Activated naive CD4-positive, alpha-beta T cell treated with anti-CD3 and anti-CD28 coated beads for 36 hours (primary cell): ENCODE measurements at regions of chrX and their contacts with region 1.

Region 1: GRCh38 chrX:68504237-68504636 is 5.4 kb downstream of the YIPF6 start:
- DNase-seq: peak; percentile 86
- H3K4me3 Mint-ChIP-seq: no peak overlapping the region
- H3K27ac Mint-ChIP-seq: peak overlapping the region; percentile 92
- H3K4me1 Mint-ChIP-seq: peaks cover 62% of the 10 kb centered on the region
- H3K27me3 Mint-ChIP-seq: no peaks in the 10 kb centered on the region

Region 2: DNA sequence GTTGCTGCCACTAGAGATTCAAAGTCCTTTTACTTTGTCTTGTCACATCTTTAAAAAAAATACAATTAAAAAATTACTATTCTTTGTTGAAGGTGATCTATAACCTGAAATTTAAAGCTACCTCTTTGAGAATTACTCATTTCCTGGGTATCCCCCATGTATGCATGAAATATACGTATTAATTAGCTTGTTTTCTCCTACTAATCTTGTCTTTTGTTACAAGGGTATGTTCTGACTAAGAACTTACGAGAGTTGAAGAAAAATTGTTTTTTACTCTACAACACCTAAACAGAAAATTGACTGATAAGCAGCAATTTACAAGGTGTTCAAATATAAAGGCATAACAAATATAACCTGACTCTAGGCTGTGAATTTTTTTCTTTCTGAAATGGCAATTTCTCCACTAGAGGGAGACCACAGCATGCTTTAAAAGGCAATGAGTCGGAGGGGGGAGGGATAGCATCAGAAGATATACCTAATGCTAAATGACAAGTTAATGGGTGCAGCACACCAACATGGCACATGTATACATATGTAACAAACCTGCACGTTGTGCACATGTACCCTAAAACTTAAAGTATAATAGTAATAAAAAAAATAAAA is 320.5 kb before region 1 on chrX:
- CTCF ChIA-PET with region 1: no interaction called
- intact Hi-C with region 1: loop called (anchors 5 kb)
- DNase-seq: no peak
- H3K4me3 Mint-ChIP-seq: no peak overlapping the region
- H3K27ac Mint-ChIP-seq: no peak overlapping the region
- H3K4me1 Mint-ChIP-seq: peaks cover 11% of the 10 kb centered on the region
- H3K27me3 Mint-ChIP-seq: no peaks in the 10 kb centered on the region

Region 3: GRCh38 chrX:68571610-68572311 is 67.5 kb after region 1 on chrX:
- CTCF ChIA-PET with region 1: no interaction called
- intact Hi-C with region 1: loop called (anchors 1 kb)
- DNase-seq: peak; percentile 34
- H3K4me3 Mint-ChIP-seq: no peak overlapping the region
- H3K27ac Mint-ChIP-seq: no peak overlapping the region
- H3K4me1 Mint-ChIP-seq: peaks cover 24% of the 10 kb centered on the region
- H3K27me3 Mint-ChIP-seq: no peaks in the 10 kb centered on the region

Region 4: DNA sequence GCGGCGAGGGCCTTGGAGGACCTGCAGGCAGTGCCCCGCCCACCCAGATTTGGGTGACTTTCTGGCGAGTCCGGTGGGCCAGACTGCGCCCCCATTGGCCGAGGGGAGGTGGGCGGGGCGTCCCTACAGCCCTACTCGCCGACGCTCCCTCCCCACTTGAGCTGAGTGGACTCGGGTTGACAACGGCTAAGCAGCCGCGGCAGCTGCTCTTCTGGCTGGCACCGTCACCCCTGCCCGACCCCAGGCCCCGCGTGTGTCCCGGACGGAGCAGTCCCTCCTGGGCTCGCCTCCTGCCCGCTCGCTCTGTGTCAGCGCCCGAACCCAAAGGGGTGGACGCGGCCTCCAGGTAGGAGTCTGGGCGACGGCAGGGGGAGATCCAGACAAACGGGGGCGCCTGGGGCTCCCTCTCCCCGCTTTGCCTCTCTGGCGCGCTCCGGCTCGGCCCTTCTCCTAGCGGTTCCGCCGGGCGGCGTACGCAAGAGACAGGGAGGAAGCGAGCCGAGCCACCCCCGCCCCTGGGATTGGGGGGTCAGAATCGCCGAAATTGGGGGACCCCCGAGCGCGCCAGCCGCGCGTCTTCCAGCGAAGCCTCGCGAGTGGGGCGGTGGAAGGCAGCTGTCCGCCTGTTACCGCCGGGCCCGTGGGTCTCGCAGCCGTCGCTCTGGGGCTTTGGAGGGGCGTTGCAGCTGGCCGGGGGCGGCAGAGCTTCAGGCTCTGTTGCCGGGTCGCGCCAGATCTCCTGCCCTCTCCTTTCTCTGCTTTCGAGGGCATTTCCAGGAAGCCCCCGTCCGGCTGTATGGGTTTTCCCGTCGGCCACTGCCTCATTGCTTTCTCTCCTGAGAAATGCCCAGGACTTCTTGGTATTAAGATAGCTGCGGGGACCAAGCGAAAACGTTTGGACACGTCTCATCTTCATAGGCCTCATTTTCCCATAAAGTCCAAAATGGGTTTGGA is 189.5 kb after region 1 on chrX:
- CTCF ChIA-PET with region 1: no interaction called
- intact Hi-C with region 1: loop called (anchors 5 kb)
- DNase-seq: no peak
- H3K4me3 Mint-ChIP-seq: no peak overlapping the region
- H3K27ac Mint-ChIP-seq: no peak overlapping the region
- H3K4me1 Mint-ChIP-seq: peaks cover 3% of the 10 kb centered on the region
- H3K27me3 Mint-ChIP-seq: peaks cover 20% of the 10 kb centered on the region

Region 5: GRCh38 chrX:68710870-68711576 is 206.8 kb after region 1 on chrX:
- CTCF ChIA-PET with region 1: no interaction called
- intact Hi-C with region 1: no loop called
- DNase-seq: peak; percentile 28
- H3K4me3 Mint-ChIP-seq: no peak overlapping the region
- H3K27ac Mint-ChIP-seq: no peak overlapping the region
- H3K4me1 Mint-ChIP-seq: no peaks in the 10 kb centered on the region
- H3K27me3 Mint-ChIP-seq: no peaks in the 10 kb centered on the region

Region 6: DNA sequence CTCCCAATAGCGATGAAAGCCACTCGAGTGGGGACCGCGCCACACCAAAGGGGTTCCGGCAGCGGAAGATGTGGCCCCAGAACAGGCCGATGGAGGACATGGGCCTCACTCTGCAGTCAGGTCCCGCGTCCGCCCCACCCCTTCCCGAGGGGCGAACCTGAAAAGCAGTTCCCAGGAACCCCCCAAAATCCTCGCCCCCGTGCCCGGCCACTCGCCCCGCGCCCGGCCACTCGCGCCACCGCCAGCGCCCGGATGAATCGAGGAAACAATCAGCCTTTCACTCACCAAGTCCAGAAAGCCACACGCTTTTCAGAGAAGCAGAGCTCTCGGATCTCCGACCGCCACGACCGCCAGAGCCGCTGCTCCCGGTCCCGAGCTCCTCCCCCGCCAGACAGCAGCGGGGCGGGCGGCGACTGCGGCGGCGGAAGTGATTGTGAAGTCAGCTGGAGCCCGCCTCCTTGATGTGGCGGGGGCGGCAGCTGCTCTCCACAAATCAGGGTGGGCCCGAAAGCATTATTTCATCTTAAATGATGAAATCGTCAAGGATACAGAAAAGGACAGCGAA is 660.9 kb after region 1 on chrX and contains the start of gene PJA1:
- CTCF ChIA-PET with region 1: interaction called, 3 read pairs
- intact Hi-C with region 1: loop called (anchors 2 kb)
- DNase-seq: peak; percentile 76
- H3K4me3 Mint-ChIP-seq: peak within 1 kb of the TSS; percentile 83
- H3K27ac Mint-ChIP-seq: peak within 1 kb of the TSS; percentile 82
- H3K4me1 Mint-ChIP-seq: peaks cover 33% of the 10 kb centered on the region
- H3K27me3 Mint-ChIP-seq: no peaks in the 10 kb centered on the region
- total RNA-seq, gene PJA1: 10.7 to 11.0 TPM

Region 7: GRCh38 chrX:69222103-69223090 is 718.2 kb after region 1 on chrX:
- CTCF ChIA-PET with region 1: no interaction called
- intact Hi-C with region 1: loop called (anchors 10 kb)
- DNase-seq: peak; percentile 80
- H3K4me3 Mint-ChIP-seq: no peak overlapping the region
- H3K27ac Mint-ChIP-seq: no peak overlapping the region
- H3K4me1 Mint-ChIP-seq: no peaks in the 10 kb centered on the region
- H3K27me3 Mint-ChIP-seq: no peaks in the 10 kb centered on the region